ENCODE measurements at regions of chr7 and their contacts with region 1.

Region 1: DNA sequence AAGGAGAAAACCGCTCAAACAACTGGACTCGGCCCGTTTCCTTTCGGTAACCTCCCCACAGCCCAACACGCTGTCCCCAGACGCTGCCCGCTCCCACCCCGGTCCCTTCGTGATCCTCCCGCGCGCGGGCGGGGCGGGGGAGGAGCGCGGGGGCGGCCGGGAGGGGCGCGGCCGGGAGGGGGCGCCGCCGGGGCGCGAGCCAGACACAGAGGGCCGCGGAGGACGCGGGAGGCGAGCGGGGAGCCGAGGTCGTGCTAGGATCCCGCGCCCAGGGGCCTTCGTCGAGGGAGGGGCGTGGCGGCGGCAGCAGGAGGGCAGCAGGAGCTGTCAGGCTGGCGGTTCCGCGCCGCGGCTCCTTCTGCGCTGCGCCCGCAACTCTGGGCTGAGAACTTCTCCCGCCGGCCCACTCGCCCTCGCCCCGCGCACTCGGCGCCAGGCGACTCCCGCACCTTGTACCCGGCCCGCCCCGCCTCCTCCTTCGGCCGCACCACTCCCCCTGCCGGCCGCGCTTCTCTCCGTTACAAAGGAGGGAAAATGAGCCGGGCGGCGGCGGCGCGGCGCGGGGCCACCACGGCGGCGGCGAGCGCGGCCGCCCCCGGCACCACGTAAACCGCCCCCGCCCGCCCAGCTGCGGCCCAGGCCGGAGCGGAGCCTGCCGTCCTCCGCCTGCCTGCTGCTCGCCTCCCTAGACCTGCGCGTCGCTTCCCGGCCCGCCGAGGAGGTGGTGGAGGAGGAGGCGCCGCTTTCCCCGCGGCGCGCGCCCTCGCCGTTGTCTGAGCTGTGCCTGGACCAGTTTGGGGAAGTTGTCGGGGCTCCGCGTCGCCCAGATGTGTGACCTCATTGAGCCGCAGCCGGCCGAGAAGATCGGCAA is at the start of gene CDK14:
- DNase-seq: peak; percentile 79
- ATAC-seq: peak; percentile 66
- H3K4me3 Mint-ChIP-seq: peak within 1 kb of the TSS; percentile 96
- H3K27ac Mint-ChIP-seq: peak within 1 kb of the TSS; percentile 95
- H3K4me1 Mint-ChIP-seq: peaks cover 56% of the 10 kb centered on the region
- H3K27me3 Mint-ChIP-seq: no peaks in the 10 kb centered on the region
- CTCF ChIP-seq: no peak
- total RNA-seq, gene CDK14: 130 and 140 TPM in 2 replicates

Region 2: DNA sequence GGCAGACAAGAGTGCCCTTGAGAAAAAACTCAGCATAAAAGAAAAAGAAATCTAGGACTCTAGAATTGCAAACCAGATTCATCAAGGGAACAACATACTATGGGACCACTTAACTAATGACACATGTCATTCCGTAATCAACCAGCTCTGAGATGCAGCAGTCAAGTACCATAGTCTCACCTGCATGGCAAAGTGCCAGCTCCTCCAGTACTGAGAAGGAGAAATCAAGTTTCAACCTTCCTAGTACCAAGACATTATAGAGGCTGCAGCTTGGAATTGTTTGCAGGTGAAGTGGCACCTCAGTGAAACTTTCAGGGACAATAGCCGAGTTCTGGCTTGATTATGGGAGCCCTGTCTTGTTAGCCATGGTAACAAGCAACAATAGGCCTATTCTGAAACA is 430.3 kb before region 1 on chr7:
- CTCF ChIA-PET with region 1: no interaction called
- POLR2A ChIA-PET with region 1: no interaction called
- intact Hi-C with region 1: no loop called
- DNase-seq: no peak
- ATAC-seq: no peak
- H3K4me3 Mint-ChIP-seq: no peak overlapping the region
- H3K27ac Mint-ChIP-seq: no peak overlapping the region
- H3K4me1 Mint-ChIP-seq: no peaks in the 10 kb centered on the region
- H3K27me3 Mint-ChIP-seq: peaks cover 4% of the 10 kb centered on the region
- CTCF ChIP-seq: no peak

Region 3: DNA sequence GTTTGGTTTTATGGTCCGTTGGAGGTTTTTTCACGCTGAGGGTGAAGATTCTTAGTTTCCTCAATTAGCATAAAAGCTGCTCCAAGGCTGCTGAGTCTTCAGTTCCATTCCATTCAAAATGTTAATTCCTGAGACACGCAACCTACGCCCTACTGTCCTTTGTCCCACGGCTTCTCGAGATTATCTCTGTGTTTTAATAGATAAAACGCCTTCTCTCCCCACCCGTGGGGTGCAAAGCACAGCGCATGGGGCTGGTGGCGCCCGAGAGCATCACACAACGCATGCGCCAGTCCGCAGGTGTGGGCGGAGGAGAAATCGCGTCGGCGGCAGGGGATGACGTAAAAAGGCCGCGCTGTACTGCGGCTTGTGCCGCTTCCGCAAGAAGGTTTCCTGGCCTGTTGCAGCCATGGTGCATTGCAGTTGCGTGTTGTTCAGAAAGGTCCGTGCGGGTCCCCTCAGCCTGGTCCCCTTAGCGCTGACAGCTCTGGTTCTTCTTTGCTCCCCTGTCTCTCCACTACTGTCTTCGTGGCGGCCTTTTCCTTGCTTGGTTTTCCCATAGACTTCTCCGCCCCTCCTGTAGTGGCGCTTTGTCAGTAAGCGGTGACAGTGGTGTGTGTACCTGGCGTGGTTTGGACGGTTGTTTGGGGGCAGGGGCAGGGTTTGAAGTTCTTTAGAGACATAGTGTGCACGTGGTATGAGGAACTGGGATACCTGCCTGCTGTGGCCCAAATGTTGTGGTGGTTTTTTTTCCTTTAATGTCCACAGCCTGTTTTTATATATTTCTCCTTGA is 249.5 kb before region 1 on chr7 and contains the start of gene GTPBP10:
- CTCF ChIA-PET with region 1: no interaction called
- POLR2A ChIA-PET with region 1: no interaction called
- intact Hi-C with region 1: loop called (anchors 5 kb)
- DNase-seq: peak; percentile 90
- ATAC-seq: peak; percentile 97
- H3K4me3 Mint-ChIP-seq: peak within 1 kb of the TSS; percentile 96
- H3K27ac Mint-ChIP-seq: peak within 1 kb of the TSS; percentile 98
- H3K4me1 Mint-ChIP-seq: peaks cover 35% of the 10 kb centered on the region
- H3K27me3 Mint-ChIP-seq: no peaks in the 10 kb centered on the region
- CTCF ChIP-seq: peak; percentile 37
- total RNA-seq, gene GTPBP10: 28.8 and 29.5 TPM in 2 replicates

Region 4: GRCh38 chr7:90552521-90552920 is 43.5 kb before region 1 on chr7:
- CTCF ChIA-PET with region 1: interaction called, 3 read pairs
- POLR2A ChIA-PET with region 1: no interaction called
- intact Hi-C with region 1: loop called (anchors 1 kb)
- DNase-seq: no peak
- ATAC-seq: peak; percentile 34
- H3K4me3 Mint-ChIP-seq: no peak overlapping the region
- H3K27ac Mint-ChIP-seq: no peak overlapping the region
- H3K4me1 Mint-ChIP-seq: peaks cover 3% of the 10 kb centered on the region
- H3K27me3 Mint-ChIP-seq: peaks cover 3% of the 10 kb centered on the region
- CTCF ChIP-seq: no peak

Region 5: GRCh38 chr7:90613088-90613498 is 17.1 kb after region 1 on chr7:
- CTCF ChIA-PET with region 1: no interaction called
- POLR2A ChIA-PET with region 1: interaction called, 5 read pairs
- intact Hi-C with region 1: loop called (anchors 1 kb)
- DNase-seq: no peak
- ATAC-seq: peak; percentile 90
- H3K4me3 Mint-ChIP-seq: peak overlapping the region; percentile 71
- H3K27ac Mint-ChIP-seq: peak overlapping the region; percentile 91
- H3K4me1 Mint-ChIP-seq: peaks cover 47% of the 10 kb centered on the region
- H3K27me3 Mint-ChIP-seq: no peaks in the 10 kb centered on the region
- CTCF ChIP-seq: no peak

Region 6: GRCh38 chr7:90677486-90678404 is 81.7 kb after region 1 on chr7:
- CTCF ChIA-PET with region 1: no interaction called
- POLR2A ChIA-PET with region 1: no interaction called
- intact Hi-C with region 1: no loop called
- DNase-seq: no peak
- ATAC-seq: no peak
- H3K4me3 Mint-ChIP-seq: no peak overlapping the region
- H3K27ac Mint-ChIP-seq: no peak overlapping the region
- H3K4me1 Mint-ChIP-seq: peaks cover 9% of the 10 kb centered on the region
- H3K27me3 Mint-ChIP-seq: no peaks in the 10 kb centered on the region
- CTCF ChIP-seq: no peak

Region 7: DNA sequence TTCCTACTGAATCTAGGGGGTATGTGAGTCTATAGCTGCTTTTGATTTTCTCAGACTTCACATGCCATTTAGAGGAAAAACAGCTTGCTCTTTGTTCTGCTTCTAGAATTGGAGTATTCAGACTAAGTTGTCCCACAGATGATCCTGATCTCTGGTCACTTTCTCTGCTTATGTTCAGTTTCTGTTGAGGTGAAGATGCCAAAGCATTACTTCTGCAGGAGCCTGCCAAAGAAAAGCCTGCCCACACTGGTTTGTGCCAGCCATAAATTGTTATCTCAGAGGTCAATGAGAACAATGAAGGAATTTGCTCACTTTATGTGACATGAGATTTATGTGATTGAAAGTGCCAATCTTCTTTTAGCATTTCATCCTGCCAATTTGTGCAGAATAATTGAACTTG is 163.7 kb after region 1 on chr7:
- CTCF ChIA-PET with region 1: no interaction called
- POLR2A ChIA-PET with region 1: no interaction called
- intact Hi-C with region 1: loop called (anchors 5 kb)
- DNase-seq: no peak
- ATAC-seq: no peak
- H3K4me3 Mint-ChIP-seq: peak overlapping the region; percentile 24
- H3K27ac Mint-ChIP-seq: peak overlapping the region; percentile 62
- H3K4me1 Mint-ChIP-seq: peaks cover 93% of the 10 kb centered on the region
- H3K27me3 Mint-ChIP-seq: no peaks in the 10 kb centered on the region
- CTCF ChIP-seq: no peak

Region 8: GRCh38 chr7:90788052-90788451 is 192.0 kb after region 1 on chr7:
- CTCF ChIA-PET with region 1: no interaction called
- POLR2A ChIA-PET with region 1: no interaction called
- intact Hi-C with region 1: no loop called
- DNase-seq: no peak
- ATAC-seq: no peak
- H3K4me3 Mint-ChIP-seq: no peak overlapping the region
- H3K27ac Mint-ChIP-seq: no peak overlapping the region
- H3K4me1 Mint-ChIP-seq: peaks cover 14% of the 10 kb centered on the region
- H3K27me3 Mint-ChIP-seq: no peaks in the 10 kb centered on the region
- CTCF ChIP-seq: no peak

Region 9: DNA sequence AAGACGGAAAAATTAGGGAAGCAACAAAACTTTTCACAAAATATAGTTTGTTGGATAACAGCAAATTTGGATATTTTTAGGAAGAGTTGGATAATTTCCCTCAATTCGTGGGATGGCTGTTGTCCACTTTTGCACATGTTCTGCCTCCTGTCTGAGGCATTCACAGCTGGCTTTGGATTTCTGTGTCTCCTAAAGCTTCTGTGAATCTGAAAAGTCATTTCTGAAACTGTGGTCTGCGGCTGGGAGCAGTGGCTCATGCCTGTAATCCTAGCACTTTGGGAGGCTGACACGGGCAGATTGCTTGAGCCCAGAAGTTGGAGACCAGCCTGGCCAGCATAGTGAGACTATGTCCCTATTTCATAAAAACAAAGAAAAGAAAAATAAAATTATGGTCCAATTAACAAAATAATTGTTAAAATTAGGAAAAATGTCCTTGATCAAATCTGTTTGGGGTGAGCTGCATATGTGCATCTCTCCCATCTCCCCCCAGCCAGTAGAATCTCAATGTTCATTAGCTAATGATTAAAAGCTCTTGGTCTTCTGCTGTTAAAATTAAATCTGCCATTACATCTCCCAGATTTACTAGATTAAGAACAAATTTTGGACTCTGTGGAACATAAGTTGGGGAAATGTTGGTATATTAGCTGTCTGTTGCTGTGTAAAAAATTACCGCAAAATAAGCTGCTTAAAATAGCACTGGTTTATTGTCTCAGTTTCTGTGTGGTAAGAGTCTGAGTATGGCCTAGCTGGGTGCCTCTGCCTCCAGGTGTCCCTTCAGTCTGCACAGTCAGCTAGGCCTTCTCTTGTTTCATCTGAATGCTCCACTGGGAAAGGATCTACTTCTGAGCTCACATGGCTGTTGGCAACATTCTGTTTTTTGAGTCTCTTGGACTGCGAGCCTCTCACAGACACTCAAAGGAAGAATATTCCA is 336.2 kb after region 1 on chr7:
- CTCF ChIA-PET with region 1: no interaction called
- POLR2A ChIA-PET with region 1: no interaction called
- intact Hi-C with region 1: no loop called
- DNase-seq: no peak
- ATAC-seq: peak; percentile 25
- H3K4me3 Mint-ChIP-seq: no peak overlapping the region
- H3K27ac Mint-ChIP-seq: peak overlapping the region; percentile 21
- H3K4me1 Mint-ChIP-seq: peaks cover 38% of the 10 kb centered on the region
- H3K27me3 Mint-ChIP-seq: no peaks in the 10 kb centered on the region
- CTCF ChIP-seq: no peak

Region 10: GRCh38 chr7:91940572-91941341 is 1344.7 kb after region 1 on chr7 and contains the start of gene AKAP9:
- CTCF ChIA-PET with region 1: no interaction called
- POLR2A ChIA-PET with region 1: no interaction called
- intact Hi-C with region 1: loop called (anchors 5 kb)
- DNase-seq: peak; percentile 85
- ATAC-seq: peak; percentile 91
- H3K4me3 Mint-ChIP-seq: peak within 1 kb of the TSS; percentile 94
- H3K27ac Mint-ChIP-seq: peak within 1 kb of the TSS; percentile 93
- H3K4me1 Mint-ChIP-seq: peaks cover 42% of the 10 kb centered on the region
- H3K27me3 Mint-ChIP-seq: no peaks in the 10 kb centered on the region
- CTCF ChIP-seq: no peak
- total RNA-seq, gene AKAP9: 54.4 and 58.4 TPM in 2 replicates